Left cardiac atrium (tissue), 4 donors: ENCODE measurements at regions of chr13 and their contacts with region 1.

Region 1: GRCh38 chr13:21287331-21287907 is 111.0 kb downstream of the MRPL57 start:
- DNase-seq: no peak
- ATAC-seq: no peak

Region 2: DNA sequence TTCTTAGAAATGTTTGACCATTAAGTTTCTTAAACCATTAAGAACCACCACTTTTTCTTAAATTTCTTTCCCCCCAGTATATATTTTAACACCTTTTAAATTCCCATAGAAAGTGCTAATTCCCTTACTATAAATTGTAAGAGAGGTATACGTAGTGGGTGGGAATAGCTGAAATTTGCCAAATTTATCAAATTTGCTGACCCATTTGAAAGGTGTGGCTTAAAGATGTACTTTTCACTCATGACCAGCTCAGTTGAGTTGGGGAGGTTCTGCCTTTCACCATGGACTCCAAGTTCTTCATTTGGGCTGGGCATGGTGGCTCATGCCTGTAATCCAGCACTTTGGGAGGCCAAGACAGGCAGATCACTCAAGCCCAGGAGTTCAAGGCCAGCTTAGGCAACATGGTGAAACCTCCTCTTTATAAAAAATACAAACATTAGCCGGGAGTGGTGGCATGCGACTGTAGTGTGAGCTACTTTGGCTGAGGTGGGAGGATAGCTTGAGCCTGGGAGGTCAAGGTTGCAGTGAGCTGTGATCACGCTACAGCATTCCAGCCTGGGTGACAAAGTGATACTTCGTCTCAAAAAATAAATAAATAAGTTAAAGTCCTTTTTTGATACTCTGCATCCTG is 22.2 kb after region 1 on chr13:
- intact Hi-C with region 1: loop called in 1 of 2 experiments (anchors 2 kb)
- DNase-seq: no peak
- ATAC-seq: no peak